Activated CD8-positive, alpha-beta T cell treated with anti-CD3 and anti-CD28 coated beads for 36 hours (primary cell): ENCODE measurements at regions of chr11 and their contacts with region 1.

Region 1: DNA sequence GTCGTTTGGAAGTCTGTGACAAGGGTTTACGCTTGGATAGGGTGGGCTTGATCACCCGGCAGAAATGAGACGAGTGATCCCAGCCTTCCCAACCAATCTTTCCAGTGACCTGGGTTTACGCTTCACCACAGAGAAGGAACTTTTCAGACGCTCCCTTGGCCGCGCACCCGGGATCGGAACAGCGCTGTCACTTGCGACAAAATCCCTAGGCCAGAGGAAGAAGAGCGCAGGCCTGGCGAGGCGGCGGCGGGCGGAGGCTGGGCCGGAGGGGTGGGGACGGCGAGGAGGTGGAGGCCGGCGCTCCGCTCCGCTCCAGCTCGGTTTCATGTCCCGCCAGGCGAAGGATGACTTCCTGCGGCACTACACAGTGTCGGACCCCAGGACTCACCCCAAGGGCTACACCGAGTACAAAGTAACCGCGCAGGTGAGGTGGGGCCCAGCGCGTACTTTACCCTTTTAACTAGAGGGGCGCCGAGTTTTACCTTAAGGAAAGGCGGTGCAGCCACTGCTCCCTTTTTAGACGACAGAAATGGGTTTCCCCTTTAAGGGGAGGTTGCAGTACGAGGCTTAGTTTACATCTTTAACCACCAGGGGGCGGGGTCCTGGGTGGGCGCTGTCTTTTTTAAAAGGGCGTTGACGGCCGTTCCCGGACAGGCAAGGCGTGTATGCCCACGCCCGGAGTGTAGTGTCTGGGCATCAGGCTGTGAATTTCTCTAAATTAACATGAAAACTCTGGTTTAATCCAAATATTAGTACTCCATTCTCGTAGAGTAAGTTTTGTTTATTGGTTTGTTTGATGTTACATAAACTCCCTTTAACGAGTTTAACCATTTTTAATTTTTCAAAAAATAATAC is at the start of gene SNX15:
- DNase-seq: peak; percentile 96
- ATAC-seq: peak; percentile 94
- H3K4me3 Mint-ChIP-seq: peak within 1 kb of the TSS; percentile 74
- H3K27ac Mint-ChIP-seq: peak within 1 kb of the TSS; percentile 81
- H3K4me1 Mint-ChIP-seq: peaks cover 13% of the 10 kb centered on the region
- H3K27me3 Mint-ChIP-seq: no peaks in the 10 kb centered on the region
- CTCF ChIP-seq: peak; percentile 80
- total RNA-seq, gene SNX15: 4.7 to 5.7 TPM

Region 2: DNA sequence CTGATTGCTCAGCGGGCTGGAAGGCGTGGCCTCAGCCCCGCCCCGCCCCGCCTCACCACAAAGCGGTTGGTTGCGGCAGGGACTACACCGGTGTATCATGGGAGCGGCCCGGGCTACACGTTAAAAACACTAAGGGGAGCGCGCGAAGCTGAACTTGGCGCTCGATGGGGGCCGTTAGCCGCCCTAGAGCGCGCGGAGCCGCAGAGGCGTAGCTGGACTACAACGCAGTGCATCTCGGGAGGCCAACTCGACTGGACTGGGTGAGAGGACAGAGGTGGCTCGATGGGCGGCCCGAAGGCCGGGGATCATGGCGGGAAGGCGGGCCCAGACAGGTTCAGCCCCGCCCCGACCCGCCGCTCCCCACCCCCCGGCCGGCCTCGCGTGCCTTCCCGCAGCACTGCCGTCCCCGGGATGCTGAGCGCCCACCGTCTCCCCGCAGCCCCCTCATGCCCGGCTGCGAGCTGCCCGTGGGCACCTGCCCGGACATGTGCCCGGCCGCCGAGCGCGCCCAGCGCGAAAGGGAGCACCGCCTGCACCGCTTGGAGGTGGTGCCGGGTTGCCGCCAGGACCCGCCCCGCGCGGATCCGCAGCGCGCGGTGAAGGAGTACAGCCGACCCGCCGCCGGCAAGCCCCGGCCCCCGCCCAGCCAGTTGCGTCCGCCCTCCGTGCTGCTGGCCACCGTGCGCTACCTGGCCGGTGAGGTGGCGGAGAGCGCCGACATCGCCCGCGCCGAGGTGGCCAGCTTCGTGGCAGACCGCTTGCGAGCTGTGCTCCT is 13.6 kb after region 1 on chr11 and contains the start of gene SAC3D1:
- CTCF ChIA-PET with region 1: interaction called, 6 read pairs
- POLR2A ChIA-PET with region 1: interaction called, 13 read pairs
- intact Hi-C with region 1: no loop called
- DNase-seq: peak; percentile 95
- ATAC-seq: peak; percentile 96
- H3K4me3 Mint-ChIP-seq: peak within 1 kb of the TSS; percentile 87
- H3K27ac Mint-ChIP-seq: peak within 1 kb of the TSS; percentile 97
- H3K4me1 Mint-ChIP-seq: peaks cover 13% of the 10 kb centered on the region
- H3K27me3 Mint-ChIP-seq: no peaks in the 10 kb centered on the region
- CTCF ChIP-seq: no peak
- total RNA-seq, gene SAC3D1: 14.0 to 14.5 TPM